ENCODE measurements at regions of chr11 and their contacts with region 1.

Region 1: DNA sequence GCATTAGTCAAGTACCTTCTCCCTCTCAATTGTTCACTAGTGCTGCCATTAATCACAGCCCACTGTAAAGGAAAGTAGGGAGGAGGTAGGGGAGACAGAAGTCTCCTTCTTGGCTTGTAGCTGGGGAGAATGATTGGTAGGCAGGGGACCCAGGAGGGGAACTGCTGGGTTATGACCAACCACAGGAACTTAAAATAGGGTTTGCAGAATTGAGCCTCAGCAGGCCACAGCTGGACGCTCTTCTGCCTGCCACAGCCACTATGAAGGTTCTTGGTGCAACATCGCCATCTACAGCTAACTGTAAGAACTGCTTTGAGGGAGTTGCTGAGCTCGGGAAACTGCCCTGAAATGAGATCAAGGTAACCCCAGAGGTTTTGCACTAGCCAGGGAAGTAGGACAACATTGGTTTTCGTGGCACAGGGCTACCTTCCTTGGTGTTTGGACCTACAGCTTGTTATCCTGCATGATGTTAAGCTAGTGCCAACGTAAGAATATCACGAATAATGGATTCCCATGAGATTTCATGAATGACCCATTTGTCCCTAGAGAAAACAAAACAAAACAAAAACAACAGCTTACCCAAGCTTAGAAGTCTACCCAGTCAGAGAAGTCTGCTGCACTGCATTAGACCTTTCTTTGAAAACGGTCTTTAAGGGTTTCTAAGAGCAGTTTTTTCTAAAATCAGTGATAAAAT is 787.1 kb upstream of the API5 start:
- DNase-seq: peak in 1 of 3 donors; percentile 38
- ATAC-seq: peak; percentile 74
- H3K4me3 ChIP-seq: no peak overlapping the region
- H3K4me1 ChIP-seq: no peaks in the 10 kb centered on the region
- CTCF ChIP-seq: peak; percentile 19

Region 2: GRCh38 chr11:41461057-41461681 is 1063.5 kb before region 1 on chr11:
- intact Hi-C with region 1: loop called in 1 of 2 experiments (anchors 10 kb)
- DNase-seq: peak in 1 of 3 donors; percentile 25
- ATAC-seq: no peak
- H3K4me3 ChIP-seq: no peak overlapping the region
- H3K4me1 ChIP-seq: no peaks in the 10 kb centered on the region
- CTCF ChIP-seq: peak; percentile 37

Region 3: GRCh38 chr11:41826085-41826484 is 698.6 kb before region 1 on chr11:
- intact Hi-C with region 1: no loop called
- DNase-seq: peak in 1 of 3 donors; percentile 23
- ATAC-seq: no peak
- H3K4me3 ChIP-seq: no peak overlapping the region
- H3K4me1 ChIP-seq: no peaks in the 10 kb centered on the region
- CTCF ChIP-seq: no peak

Measured in mucosa of descending colon (tissue), 3 donors.